Heart left ventricle (tissue), 16 donors: ENCODE measurements at regions of chr1 and their contacts with region 1.

Region 1: DNA sequence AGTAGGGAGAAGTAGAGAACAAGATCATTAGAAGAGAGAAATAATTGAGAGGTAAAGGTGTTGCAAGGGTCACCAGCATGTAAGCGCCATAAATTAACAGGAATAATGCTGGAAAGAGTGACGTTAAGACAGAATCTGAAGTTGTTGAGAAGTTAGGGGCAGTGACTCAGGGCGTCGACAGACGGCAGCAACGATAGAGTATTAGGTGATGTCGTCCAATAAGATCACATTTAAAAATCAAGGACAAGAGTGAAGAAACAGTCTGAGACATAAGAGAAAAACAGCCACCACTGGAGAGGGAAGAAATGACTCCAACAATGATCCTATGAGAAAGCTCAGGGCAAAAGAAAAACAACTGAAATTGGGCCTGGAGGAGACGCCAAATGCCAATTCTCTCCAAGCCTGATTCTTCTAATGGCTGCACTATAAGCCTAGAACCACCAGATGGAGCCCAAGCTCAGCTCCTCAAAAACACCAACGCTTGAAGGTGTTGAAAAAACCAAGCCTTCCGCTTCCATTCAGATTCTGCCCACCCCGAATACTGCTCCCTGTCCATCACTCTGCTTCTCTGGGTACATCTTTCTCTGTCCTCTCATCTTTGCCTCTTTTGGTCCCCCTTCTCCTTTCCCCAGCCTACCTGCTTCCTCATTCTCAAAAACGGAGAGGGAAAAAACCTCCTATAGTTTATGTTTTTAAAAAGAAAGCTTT is 70.0 kb downstream of the LUZP1 start:
- DNase-seq: peak in 3 of 5 donors; percentile 37 to 58 (median 55)
- ATAC-seq: peak; percentile 16 to 72 (median 66)
- H3K4me3 ChIP-seq: no peak overlapping the region
- H3K27ac ChIP-seq: no peak overlapping the region
- H3K4me1 ChIP-seq: peaks cover 17 to 56% (median 47%) of the 10 kb centered on the region in 12 donors
- H3K27me3 ChIP-seq: no peaks in the 10 kb centered on the region
- CTCF ChIP-seq: peak; percentile 87 to 98 (median 92)
- POLR2A ChIP-seq: no peak

Region 2: GRCh38 chr1:23168457-23169194 is 70.0 kb after region 1 on chr1 and contains the start of gene LUZP1:
- intact Hi-C with region 1: loop called in 1 of 10 experiments (anchors 5 kb)
- DNase-seq: peak; percentile 91 to 97 (median 92)
- ATAC-seq: peak; percentile 91 to 95 (median 92)
- H3K4me3 ChIP-seq: peak within 1 kb of the TSS; percentile 67 to 98 (median 86)
- H3K27ac ChIP-seq: peak within 1 kb of the TSS; percentile 88 to 98 (median 94)
- H3K4me1 ChIP-seq: peaks cover 0 to 54% (median 43%) of the 10 kb centered on the region in 12 donors
- H3K27me3 ChIP-seq: no peaks in the 10 kb centered on the region
- CTCF ChIP-seq: no peak
- POLR2A ChIP-seq: peak; percentile 97 to 98
- total RNA-seq, gene LUZP1: 24.7 to 42.3 (median 32.6) TPM

Region 3: DNA sequence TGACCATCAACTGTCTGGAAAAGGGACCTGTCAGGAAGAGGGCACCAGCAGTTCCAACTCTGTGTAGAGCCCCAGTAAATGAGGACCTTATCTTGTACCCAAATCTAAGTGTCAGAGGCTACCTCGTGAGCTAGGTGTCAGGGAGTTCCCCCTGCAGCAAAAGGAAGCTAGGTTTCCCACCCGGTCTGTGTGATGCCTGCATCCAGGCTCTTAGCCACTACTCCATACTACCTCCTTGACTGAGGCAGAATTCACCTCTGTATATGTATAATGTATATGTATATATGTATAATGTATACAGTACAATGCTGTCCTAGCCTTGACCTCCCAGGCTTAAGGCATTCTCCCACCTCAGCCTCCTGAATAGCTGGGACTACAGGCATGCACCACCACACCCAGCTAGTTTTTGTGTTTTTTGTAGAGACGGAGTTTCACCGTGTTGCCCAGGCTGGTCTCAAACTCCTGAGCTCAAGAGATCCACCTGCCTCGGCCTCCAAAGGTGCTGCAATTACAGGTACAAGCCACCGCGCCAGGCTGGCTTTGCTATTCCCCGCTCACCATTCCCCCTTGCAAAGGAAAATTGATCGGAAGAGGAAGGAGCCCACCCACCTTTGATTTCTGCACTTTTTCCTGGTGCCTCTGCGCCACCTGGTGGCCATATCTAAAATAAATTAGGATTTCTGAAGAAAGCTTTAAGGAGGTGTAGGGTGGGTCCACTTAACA is 85.8 kb after region 1 on chr1:
- intact Hi-C with region 1: loop called (anchors 1 to 2 kb)
- DNase-seq: peak in 1 of 5 donors; percentile 23
- ATAC-seq: peak; percentile 18 to 42 (median 22)
- H3K4me3 ChIP-seq: peak overlapping the region in 9 of 12 donors; percentile 37 to 58 (median 44)
- H3K27ac ChIP-seq: no peak overlapping the region
- H3K4me1 ChIP-seq: peaks cover 0 to 8% (median 5%) of the 10 kb centered on the region in 12 donors
- H3K27me3 ChIP-seq: no peaks in the 10 kb centered on the region
- CTCF ChIP-seq: peak; percentile 57 to 93 (median 86)
- POLR2A ChIP-seq: no peak

Region 4: GRCh38 chr1:23273450-23274133 is 175.0 kb after region 1 on chr1:
- intact Hi-C with region 1: loop called in 6 of 10 experiments (anchors 5 to 10 kb)
- DNase-seq: no peak
- ATAC-seq: no peak
- H3K4me3 ChIP-seq: no peak overlapping the region
- H3K27ac ChIP-seq: no peak overlapping the region
- H3K4me1 ChIP-seq: no peaks in the 10 kb centered on the region
- H3K27me3 ChIP-seq: peaks cover 0 to 2% (median 0%) of the 10 kb centered on the region in 9 donors
- CTCF ChIP-seq: no peak
- POLR2A ChIP-seq: no peak

Region 5: DNA sequence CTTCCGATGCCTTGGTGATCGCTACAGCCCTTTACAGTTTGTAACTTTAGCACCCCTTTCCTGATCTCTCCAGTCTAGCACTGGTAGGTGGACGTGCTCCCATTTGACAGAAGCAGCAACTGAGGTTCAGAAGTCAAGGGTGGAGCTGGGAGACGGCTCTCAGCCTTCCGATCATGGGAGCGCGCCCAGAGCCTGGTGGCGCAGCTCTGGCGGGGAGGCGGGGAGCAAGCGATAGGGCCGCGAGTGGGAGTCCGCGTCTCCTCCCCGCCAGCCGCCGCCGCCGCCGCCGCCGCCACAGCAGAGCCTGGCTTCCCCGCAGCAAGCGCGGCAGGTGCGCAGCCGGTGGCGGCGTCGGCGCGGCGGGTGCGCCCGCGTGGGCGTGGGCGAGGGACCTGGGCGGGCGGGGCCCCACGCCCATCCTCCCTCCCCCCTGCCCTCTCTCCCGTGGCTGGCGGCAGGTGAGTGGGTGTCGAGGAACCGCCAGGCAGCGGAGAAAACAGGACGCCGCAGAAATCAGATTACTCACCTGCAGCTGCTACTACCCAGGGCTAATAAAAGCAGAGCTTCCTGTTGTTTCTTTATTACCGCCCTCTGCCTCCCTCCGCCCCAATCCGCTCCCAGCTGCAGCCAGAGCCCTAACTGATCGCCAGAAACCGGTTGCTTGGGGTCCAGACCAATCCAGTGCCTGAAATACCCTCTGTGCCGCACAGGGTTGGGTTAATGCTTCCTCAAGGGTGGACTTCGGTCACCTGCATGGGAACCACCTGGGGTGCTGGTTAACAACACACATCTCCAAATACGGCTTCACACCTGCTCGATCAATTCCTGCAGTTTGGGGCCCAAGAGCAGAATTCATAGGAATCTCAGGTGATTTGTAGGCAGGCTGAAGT is 520.9 kb after region 1 on chr1:
- intact Hi-C with region 1: no loop called
- DNase-seq: peak in 1 of 5 donors; percentile 29
- ATAC-seq: peak in 3 of 4 donors; percentile 25 to 62 (median 55)
- H3K4me3 ChIP-seq: peak overlapping the region in 11 of 12 donors; percentile 8 to 52 (median 44)
- H3K27ac ChIP-seq: peak overlapping the region in 1 of 12 donors; percentile 58
- H3K4me1 ChIP-seq: peaks cover 0 to 9% (median 0%) of the 10 kb centered on the region in 12 donors
- H3K27me3 ChIP-seq: peaks cover 0 to 12% (median 3%) of the 10 kb centered on the region in 9 donors
- CTCF ChIP-seq: no peak
- POLR2A ChIP-seq: no peak